IMR-90 (cell line): ENCODE measurements at regions of chr3 and their contacts with region 1.

Region 1: GRCh38 chr3:32391643-32392535 is at the start of gene CMTM7:
- DNase-seq: peak; percentile 35
- ATAC-seq: peak; percentile 88
- H3K4me3 ChIP-seq: peak within 1 kb of the TSS; percentile 90
- H3K27ac ChIP-seq: peak within 1 kb of the TSS; percentile 76
- H3K4me1 ChIP-seq: peaks cover 2% of the 10 kb centered on the region; the same call in 1 of the 2 replicates
- H3K27me3 ChIP-seq: no peaks in the 10 kb centered on the region; the same call in 1 of the 2 replicates
- CTCF ChIP-seq: no peak
- POLR2A ChIP-seq: peak; percentile 39; the same call in 1 of the 2 replicates
- RAD21 ChIP-seq: no peak; the same call in 1 of the 2 replicates
- total RNA-seq, gene CMTM7: 3.4 and 3.9 TPM in 2 replicates

Region 2: GRCh38 chr3:32177702-32178198 is 214.1 kb before region 1 on chr3:
- CTCF ChIA-PET with region 1: no interaction called
- POLR2A ChIA-PET with region 1: no interaction called
- dilution Hi-C with region 1: no loop called
- in situ Hi-C with region 1: no loop called
- intact Hi-C with region 1: loop called (anchors 5 kb)
- DNase-seq: peak; percentile 47
- ATAC-seq: peak; percentile 81
- H3K4me3 ChIP-seq: no peak overlapping the region
- H3K27ac ChIP-seq: no peak overlapping the region
- H3K4me1 ChIP-seq: no peaks in the 10 kb centered on the region
- H3K27me3 ChIP-seq: peaks cover 18% of the 10 kb centered on the region
- CTCF ChIP-seq: peak; percentile 47
- POLR2A ChIP-seq: no peak
- RAD21 ChIP-seq: peak; percentile 33; the same call in 1 of the 2 replicates

Region 3: DNA sequence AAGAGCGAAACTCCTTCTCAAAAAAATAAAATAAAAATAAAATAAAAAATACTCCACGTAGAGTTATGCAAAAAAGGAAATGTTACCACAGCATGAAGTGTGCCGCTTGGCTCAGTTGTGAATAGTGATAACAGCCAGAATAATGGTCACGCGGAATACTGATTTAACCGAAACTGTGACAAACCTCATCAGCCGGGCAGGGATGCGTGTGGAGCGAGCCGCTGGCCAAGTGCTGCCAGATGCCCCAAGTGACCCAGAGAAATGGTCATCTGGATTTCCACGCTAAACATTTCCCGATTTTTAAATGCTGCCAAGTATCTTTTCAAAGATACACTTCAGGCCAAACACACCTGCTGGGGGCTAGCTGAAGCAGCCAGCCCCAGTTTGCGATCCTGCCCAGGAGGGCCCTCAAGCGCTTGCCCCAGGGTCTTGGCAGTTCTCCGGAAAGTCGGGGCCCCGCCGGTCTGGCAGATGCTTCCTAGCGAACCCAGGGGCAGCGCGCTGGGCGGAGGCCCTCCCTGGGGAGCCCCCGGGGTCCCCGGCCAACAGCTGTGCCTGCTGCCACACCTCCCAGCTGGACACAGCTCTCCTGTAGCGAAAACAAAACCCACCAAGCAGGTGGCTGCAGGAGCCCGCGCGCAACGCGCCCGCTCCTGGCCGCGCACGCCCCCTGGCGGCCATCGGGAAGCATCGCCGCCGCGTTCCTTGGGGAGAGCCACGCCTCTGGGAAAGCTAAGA is 75.6 kb after region 1 on chr3:
- CTCF ChIA-PET with region 1: interaction called, 5 read pairs
- POLR2A ChIA-PET with region 1: no interaction called
- dilution Hi-C with region 1: no loop called
- in situ Hi-C with region 1: loop called (anchors 5 kb)
- intact Hi-C with region 1: loop called (anchors 1 kb)
- DNase-seq: peak; percentile 52
- ATAC-seq: peak; percentile 76
- H3K4me3 ChIP-seq: no peak overlapping the region
- H3K27ac ChIP-seq: no peak overlapping the region
- H3K4me1 ChIP-seq: peaks cover 11% of the 10 kb centered on the region
- H3K27me3 ChIP-seq: no peaks in the 10 kb centered on the region
- CTCF ChIP-seq: peak; percentile 92
- POLR2A ChIP-seq: no peak
- RAD21 ChIP-seq: peak; percentile 92

Region 4: DNA sequence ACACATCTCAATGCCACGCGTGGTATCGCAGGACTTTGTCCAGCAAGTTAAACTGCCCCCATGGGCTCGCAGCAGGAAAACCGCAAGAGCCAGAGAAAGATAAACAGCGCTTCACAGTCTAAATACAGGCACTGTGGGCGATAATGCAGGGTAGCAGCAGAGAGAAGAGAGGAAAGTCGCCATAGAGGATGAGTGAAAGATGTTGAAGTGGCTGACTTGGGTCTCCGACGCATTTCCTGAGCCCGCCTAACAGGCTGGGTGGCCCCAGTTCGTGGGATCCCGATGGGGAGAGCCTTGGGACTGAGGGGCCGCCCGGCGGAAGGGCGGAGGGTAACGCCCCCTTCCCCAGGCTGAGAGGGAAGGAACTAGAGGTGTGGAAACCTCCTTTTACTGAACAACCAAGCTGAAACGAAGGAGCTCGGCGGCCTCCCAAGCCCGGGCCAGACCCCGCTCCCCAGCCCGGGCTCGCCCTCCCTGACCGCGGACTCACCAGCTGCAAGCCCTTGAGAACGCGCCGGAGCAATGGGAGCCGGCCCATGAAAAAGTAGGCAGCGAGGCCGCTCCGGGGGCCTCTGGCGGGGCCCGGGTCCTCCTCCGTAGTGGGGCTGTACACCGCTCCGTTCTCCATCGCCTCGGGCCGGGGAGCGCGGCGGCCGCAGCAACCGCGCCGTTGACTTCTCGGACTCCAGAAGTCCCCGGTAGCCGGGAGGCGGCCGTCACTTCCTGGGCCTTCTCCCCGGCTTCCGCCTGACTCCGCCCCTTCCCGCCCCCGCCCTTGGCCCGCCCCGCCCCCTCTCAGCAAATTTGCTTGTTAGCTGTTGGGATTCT is 110.4 kb after region 1 on chr3 and contains the start of gene CMTM6:
- CTCF ChIA-PET with region 1: no interaction called
- POLR2A ChIA-PET with region 1: no interaction called
- dilution Hi-C with region 1: no loop called
- in situ Hi-C with region 1: no loop called
- intact Hi-C with region 1: loop called (anchors 5 kb)
- DNase-seq: peak; percentile 80
- ATAC-seq: peak; percentile 88
- H3K4me3 ChIP-seq: peak within 1 kb of the TSS; percentile 59
- H3K27ac ChIP-seq: peak within 1 kb of the TSS; percentile 88
- H3K4me1 ChIP-seq: peaks cover 3% of the 10 kb centered on the region; the same call in 1 of the 2 replicates
- H3K27me3 ChIP-seq: no peaks in the 10 kb centered on the region
- CTCF ChIP-seq: no peak
- POLR2A ChIP-seq: peak; percentile 79; the same call in 1 of the 2 replicates
- RAD21 ChIP-seq: 0 out of 2 replicates have a peak, but pooled peaks have one; percentile 7
- total RNA-seq, gene CMTM6: 36.6 and 85.0 TPM in 2 replicates

Region 5: GRCh38 chr3:32570421-32571191 is 178.7 kb after region 1 on chr3 and contains the start of gene DYNC1LI1:
- CTCF ChIA-PET with region 1: no interaction called
- POLR2A ChIA-PET with region 1: no interaction called
- dilution Hi-C with region 1: no loop called
- in situ Hi-C with region 1: no loop called
- intact Hi-C with region 1: loop called (anchors 2 kb)
- DNase-seq: peak; percentile 87
- ATAC-seq: peak; percentile 96
- H3K4me3 ChIP-seq: peak within 1 kb of the TSS; percentile 90
- H3K27ac ChIP-seq: peak within 1 kb of the TSS; percentile 98
- H3K4me1 ChIP-seq: peaks cover 1% of the 10 kb centered on the region
- H3K27me3 ChIP-seq: no peaks in the 10 kb centered on the region
- CTCF ChIP-seq: no peak
- POLR2A ChIP-seq: peak; percentile 93
- RAD21 ChIP-seq: no peak
- total RNA-seq, gene DYNC1LI1: 30.8 and 45.0 TPM in 2 replicates